ENCODE measurements at regions of chrX and their contacts with region 1.

Region 1: GRCh38 chrX:150683536-150684146 is 9.6 kb upstream of the MTMR1 start:
- DNase-seq: no peak
- H3K4me3 Mint-ChIP-seq: no peak overlapping the region
- H3K27ac Mint-ChIP-seq: no peak overlapping the region
- H3K4me1 Mint-ChIP-seq: peaks cover 9% of the 10 kb centered on the region
- H3K27me3 Mint-ChIP-seq: no peaks in the 10 kb centered on the region

Region 2: DNA sequence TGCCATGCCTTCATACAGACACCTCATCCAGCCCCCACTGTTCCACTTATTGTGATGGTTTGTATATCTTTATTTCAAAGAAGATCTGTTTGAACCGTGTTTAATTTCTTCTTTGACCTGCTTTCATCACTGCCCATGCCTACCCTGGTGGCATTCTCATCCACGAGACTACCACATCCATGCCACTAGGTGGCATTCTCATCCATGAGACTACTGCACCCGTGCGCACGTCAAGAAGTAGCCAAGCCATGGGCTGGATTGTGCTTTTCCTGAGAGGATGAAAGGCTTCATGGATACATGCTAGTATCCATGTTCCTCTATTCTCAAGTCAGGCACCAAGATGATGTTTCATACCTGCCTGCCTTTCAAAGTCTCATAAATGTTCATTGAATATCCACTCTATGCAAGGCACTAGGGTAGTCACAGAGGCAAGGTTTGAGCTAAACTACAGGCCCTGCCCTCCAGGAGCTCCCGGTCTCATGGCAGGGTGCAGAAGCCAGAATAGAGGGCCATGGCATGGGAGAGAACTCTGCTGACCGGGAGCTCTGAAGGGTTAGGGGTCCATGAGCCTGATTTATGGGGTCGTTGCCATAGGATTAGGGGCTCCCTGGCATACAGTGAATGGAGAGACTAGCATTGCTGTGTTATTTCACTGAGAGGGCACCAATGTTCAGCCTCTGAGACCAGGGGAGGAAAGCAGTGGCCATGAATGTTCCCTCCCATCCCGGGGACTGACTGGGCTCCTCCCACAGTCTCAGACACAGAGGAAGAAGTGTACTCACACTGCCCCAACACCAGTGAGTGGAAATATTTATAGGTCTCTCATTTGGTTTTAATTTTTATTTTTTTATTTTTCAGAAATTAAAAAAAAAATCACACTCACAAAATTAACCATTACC is 720.5 kb before region 1 on chrX:
- CTCF ChIA-PET with region 1: no interaction called
- POLR2A ChIA-PET with region 1: no interaction called
- intact Hi-C with region 1: loop called (anchors 2 kb)
- DNase-seq: peak; percentile 35
- H3K4me3 Mint-ChIP-seq: no peak overlapping the region
- H3K27ac Mint-ChIP-seq: no peak overlapping the region
- H3K4me1 Mint-ChIP-seq: peaks cover 4% of the 10 kb centered on the region
- H3K27me3 Mint-ChIP-seq: no peaks in the 10 kb centered on the region

Region 3: GRCh38 chrX:150449313-150449712 is 234.3 kb before region 1 on chrX:
- CTCF ChIA-PET with region 1: no interaction called
- POLR2A ChIA-PET with region 1: no interaction called
- intact Hi-C with region 1: no loop called
- DNase-seq: no peak
- H3K4me3 Mint-ChIP-seq: no peak overlapping the region
- H3K27ac Mint-ChIP-seq: no peak overlapping the region
- H3K4me1 Mint-ChIP-seq: peaks cover 15% of the 10 kb centered on the region
- H3K27me3 Mint-ChIP-seq: no peaks in the 10 kb centered on the region

Region 4: DNA sequence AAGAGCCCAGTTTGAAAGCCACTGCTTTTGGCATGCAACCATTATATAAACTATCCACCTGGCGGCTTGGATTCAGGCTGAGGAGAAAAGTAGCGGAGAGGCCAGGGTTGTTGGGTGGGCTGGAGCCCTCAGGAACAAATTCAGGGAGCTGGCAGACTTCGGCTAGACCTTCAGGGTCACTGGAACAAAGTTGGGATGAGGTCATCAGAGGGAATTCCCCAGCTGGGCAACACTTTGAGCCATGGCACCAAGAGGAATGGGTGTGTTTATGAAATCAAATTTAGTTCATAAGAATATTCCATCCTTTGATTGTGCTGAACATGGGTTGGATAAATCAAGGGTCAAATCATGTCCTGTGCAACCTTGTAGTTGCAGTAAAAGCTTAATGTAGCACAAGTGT is 31.5 kb after region 1 on chrX:
- CTCF ChIA-PET with region 1: interaction called, 106 read pairs
- POLR2A ChIA-PET with region 1: interaction called, 4 read pairs
- intact Hi-C with region 1: loop called (anchors 1 kb)
- DNase-seq: no peak
- H3K4me3 Mint-ChIP-seq: no peak overlapping the region
- H3K27ac Mint-ChIP-seq: peak overlapping the region; percentile 31
- H3K4me1 Mint-ChIP-seq: peaks cover 39% of the 10 kb centered on the region
- H3K27me3 Mint-ChIP-seq: no peaks in the 10 kb centered on the region

Region 5: GRCh38 chrX:150731795-150732194 is 48.2 kb after region 1 on chrX:
- CTCF ChIA-PET with region 1: interaction called, 12 read pairs
- POLR2A ChIA-PET with region 1: no interaction called
- intact Hi-C with region 1: no loop called
- DNase-seq: peak; percentile 79
- H3K4me3 Mint-ChIP-seq: no peak overlapping the region
- H3K27ac Mint-ChIP-seq: peak overlapping the region; percentile 15
- H3K4me1 Mint-ChIP-seq: peaks cover 35% of the 10 kb centered on the region
- H3K27me3 Mint-ChIP-seq: no peaks in the 10 kb centered on the region

Measured in activated CD4-positive, alpha-beta memory T cell treated with anti-CD3 and anti-CD28 coated beads for 36 hours (primary cell).